Activated B cell treated with CpG ODN at 0.5 μM for 24 hours (primary cell): ENCODE measurements at regions of chr4 and their contacts with region 1.

Region 1: GRCh38 chr4:102826890-102827673 is at the start of gene UBE2D3:
- DNase-seq: peak; percentile 94
- ATAC-seq: peak; percentile 49
- H3K4me3 Mint-ChIP-seq: no peak within 1 kb of the TSS
- H3K27ac Mint-ChIP-seq: no peak within 1 kb of the TSS
- H3K4me1 Mint-ChIP-seq: peaks cover 33% of the 10 kb centered on the region
- H3K27me3 Mint-ChIP-seq: no peaks in the 10 kb centered on the region
- CTCF ChIP-seq: no peak
- total RNA-seq, gene UBE2D3: 321 and 327 TPM in 2 replicates

Region 2: GRCh38 chr4:102344954-102345794 is 481.9 kb before region 1 on chr4 and contains the start of gene SLC39A8:
- CTCF ChIA-PET with region 1: no interaction called
- POLR2A ChIA-PET with region 1: interaction called, 18 read pairs
- intact Hi-C with region 1: loop called (anchors 1 kb)
- DNase-seq: peak; percentile 82
- ATAC-seq: peak; percentile 87
- H3K4me3 Mint-ChIP-seq: peak within 1 kb of the TSS; percentile 89
- H3K27ac Mint-ChIP-seq: peak within 1 kb of the TSS; percentile 93
- H3K4me1 Mint-ChIP-seq: peaks cover 34% of the 10 kb centered on the region
- H3K27me3 Mint-ChIP-seq: no peaks in the 10 kb centered on the region
- CTCF ChIP-seq: no peak
- total RNA-seq, gene SLC39A8: 17.9 and 18.1 TPM in 2 replicates

Region 3: GRCh38 chr4:102564399-102565059 is 262.6 kb before region 1 on chr4:
- CTCF ChIA-PET with region 1: no interaction called
- POLR2A ChIA-PET with region 1: interaction called, 10 read pairs
- intact Hi-C with region 1: loop called (anchors 1 kb)
- DNase-seq: peak; percentile 37
- ATAC-seq: peak; percentile 91
- H3K4me3 Mint-ChIP-seq: peak overlapping the region; percentile 61
- H3K27ac Mint-ChIP-seq: peak overlapping the region; percentile 90
- H3K4me1 Mint-ChIP-seq: peaks cover 85% of the 10 kb centered on the region
- H3K27me3 Mint-ChIP-seq: no peaks in the 10 kb centered on the region
- CTCF ChIP-seq: no peak

Region 4: GRCh38 chr4:102815981-102816380 is 11.1 kb before region 1 on chr4:
- CTCF ChIA-PET with region 1: interaction called, 3 read pairs
- POLR2A ChIA-PET with region 1: interaction called, 38 read pairs
- intact Hi-C with region 1: loop called (anchors 1 kb)
- DNase-seq: no peak
- ATAC-seq: no peak
- H3K4me3 Mint-ChIP-seq: no peak overlapping the region
- H3K27ac Mint-ChIP-seq: no peak overlapping the region
- H3K4me1 Mint-ChIP-seq: peaks cover 82% of the 10 kb centered on the region
- H3K27me3 Mint-ChIP-seq: no peaks in the 10 kb centered on the region
- CTCF ChIP-seq: no peak

Region 5: GRCh38 chr4:102868781-102869568 is 41.9 kb after region 1 on chr4 and contains the start of gene CISD2:
- CTCF ChIA-PET with region 1: interaction called, 14 read pairs
- POLR2A ChIA-PET with region 1: interaction called, 263 read pairs
- intact Hi-C with region 1: loop called (anchors 1 kb)
- DNase-seq: peak; percentile 91
- ATAC-seq: peak; percentile 86
- H3K4me3 Mint-ChIP-seq: peak within 1 kb of the TSS; percentile 97
- H3K27ac Mint-ChIP-seq: peak within 1 kb of the TSS; percentile 97
- H3K4me1 Mint-ChIP-seq: peaks cover 51% of the 10 kb centered on the region
- H3K27me3 Mint-ChIP-seq: no peaks in the 10 kb centered on the region
- CTCF ChIP-seq: no peak
- total RNA-seq, gene CISD2: 12.6 and 13.7 TPM in 2 replicates

Region 6: DNA sequence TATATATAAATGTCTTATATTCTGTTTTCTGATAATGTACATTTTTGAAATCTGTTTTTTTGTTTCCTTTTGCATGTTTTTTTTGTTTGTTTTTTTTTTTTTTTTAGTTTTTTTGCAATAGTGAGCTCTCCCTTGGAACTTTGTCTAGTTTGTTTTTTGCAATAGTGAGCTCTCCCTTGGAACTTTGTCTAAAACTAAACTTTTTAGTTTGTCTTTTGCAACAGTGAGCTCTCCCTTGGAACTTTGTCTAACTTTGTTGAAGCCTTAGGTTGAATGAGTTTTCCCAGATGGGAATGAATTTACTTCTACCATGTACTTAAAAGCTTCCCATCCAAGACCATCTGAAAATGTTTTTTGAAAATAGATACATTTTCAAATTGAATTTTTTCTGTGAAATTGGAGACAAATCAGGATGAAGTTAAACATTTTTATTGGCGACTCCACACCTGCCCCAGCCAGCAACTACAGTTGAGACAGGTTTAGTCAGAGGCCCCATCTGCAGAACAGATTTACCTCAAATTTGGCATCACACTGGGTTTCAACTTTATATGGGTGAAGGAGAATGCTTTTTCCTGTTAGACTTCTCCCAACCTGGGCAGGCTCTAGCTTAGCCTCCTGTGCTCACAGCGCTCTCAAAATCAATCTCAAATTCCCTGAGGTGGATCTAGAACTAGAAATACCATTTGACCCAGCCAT is 233.5 kb after region 1 on chr4:
- CTCF ChIA-PET with region 1: no interaction called
- POLR2A ChIA-PET with region 1: no interaction called
- intact Hi-C with region 1: no loop called
- DNase-seq: no peak
- ATAC-seq: no peak
- H3K4me3 Mint-ChIP-seq: no peak overlapping the region
- H3K27ac Mint-ChIP-seq: no peak overlapping the region
- H3K4me1 Mint-ChIP-seq: no peaks in the 10 kb centered on the region
- H3K27me3 Mint-ChIP-seq: no peaks in the 10 kb centered on the region
- CTCF ChIP-seq: no peak

Region 7: DNA sequence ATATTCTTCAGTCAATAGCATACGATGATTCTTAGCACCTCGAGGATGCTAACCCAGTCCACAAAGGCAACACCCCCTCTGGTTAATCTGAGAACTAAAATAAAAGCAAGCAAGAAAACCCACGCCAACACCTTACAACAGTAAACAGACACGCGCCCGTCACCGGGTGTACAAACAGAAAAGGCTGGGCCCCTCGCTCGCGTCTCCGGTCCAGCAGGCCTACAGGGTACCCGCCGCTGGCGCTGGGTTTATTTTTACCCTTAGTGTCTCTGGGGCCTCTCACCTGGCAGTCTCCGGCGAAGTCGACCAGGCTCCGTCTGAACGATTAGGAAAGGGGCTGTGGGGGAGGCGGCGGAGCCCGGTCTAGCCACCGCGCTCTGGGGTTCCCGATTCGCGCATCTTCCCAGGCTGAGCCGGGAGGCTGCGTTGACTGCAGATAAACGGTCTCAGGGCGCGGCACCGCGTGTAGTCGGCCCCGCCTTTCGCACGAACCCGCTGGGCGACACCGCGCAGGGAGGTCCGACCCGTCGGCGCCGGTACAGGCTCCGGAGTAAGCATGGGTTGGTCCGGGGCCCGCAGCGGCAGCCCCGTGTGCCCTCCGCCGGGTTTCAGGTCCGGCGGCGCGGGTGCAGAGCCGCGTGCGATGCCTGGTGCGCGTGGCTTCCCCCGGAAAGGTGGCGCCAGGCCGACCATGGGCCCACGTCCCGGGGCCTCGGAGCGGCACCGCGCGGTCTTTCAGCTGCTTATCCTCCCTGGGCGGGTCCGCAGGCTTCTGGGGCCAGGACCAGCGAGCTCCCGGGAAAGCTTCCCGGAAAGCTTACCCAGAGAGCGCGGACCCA is 249.0 kb after region 1 on chr4:
- CTCF ChIA-PET with region 1: no interaction called
- POLR2A ChIA-PET with region 1: interaction called, 32 read pairs
- intact Hi-C with region 1: loop called (anchors 1 kb)
- DNase-seq: peak; percentile 69
- ATAC-seq: peak; percentile 64
- H3K4me3 Mint-ChIP-seq: peak overlapping the region; percentile 96
- H3K27ac Mint-ChIP-seq: peak overlapping the region; percentile 99
- H3K4me1 Mint-ChIP-seq: peaks cover 45% of the 10 kb centered on the region
- H3K27me3 Mint-ChIP-seq: no peaks in the 10 kb centered on the region
- CTCF ChIP-seq: no peak

Region 8: DNA sequence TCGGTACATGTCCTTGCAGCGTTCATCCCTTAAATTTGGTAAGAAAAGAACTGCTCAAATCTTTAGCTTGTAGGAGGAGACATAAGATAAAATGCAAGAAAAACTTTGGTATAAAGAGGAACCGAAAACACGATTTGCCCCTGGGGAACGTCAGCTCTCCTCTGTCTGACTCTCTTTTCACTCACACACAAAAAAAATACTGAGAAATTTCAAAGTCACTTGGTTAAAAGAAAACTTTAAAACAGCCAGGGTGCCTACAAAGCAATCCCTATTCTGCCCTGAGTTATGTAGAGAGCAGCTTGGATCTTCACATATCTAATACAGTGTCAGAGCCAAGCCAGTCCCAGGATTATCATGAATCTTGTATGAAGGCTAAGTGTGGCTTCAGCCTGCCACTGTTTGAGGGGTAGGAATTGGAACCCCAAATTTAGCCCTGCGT is 1916.2 kb after region 1 on chr4:
- CTCF ChIA-PET with region 1: no interaction called
- POLR2A ChIA-PET with region 1: no interaction called
- intact Hi-C with region 1: loop called (anchors 10 kb)
- DNase-seq: no peak
- ATAC-seq: peak; percentile 87
- H3K4me3 Mint-ChIP-seq: peak overlapping the region; percentile 42
- H3K27ac Mint-ChIP-seq: peak overlapping the region; percentile 83
- H3K4me1 Mint-ChIP-seq: peaks cover 22% of the 10 kb centered on the region
- H3K27me3 Mint-ChIP-seq: peaks cover 2% of the 10 kb centered on the region
- CTCF ChIP-seq: no peak